HepG2 (cell line): ENCODE measurements at regions of chr6 and their contacts with region 1.

Region 1: DNA sequence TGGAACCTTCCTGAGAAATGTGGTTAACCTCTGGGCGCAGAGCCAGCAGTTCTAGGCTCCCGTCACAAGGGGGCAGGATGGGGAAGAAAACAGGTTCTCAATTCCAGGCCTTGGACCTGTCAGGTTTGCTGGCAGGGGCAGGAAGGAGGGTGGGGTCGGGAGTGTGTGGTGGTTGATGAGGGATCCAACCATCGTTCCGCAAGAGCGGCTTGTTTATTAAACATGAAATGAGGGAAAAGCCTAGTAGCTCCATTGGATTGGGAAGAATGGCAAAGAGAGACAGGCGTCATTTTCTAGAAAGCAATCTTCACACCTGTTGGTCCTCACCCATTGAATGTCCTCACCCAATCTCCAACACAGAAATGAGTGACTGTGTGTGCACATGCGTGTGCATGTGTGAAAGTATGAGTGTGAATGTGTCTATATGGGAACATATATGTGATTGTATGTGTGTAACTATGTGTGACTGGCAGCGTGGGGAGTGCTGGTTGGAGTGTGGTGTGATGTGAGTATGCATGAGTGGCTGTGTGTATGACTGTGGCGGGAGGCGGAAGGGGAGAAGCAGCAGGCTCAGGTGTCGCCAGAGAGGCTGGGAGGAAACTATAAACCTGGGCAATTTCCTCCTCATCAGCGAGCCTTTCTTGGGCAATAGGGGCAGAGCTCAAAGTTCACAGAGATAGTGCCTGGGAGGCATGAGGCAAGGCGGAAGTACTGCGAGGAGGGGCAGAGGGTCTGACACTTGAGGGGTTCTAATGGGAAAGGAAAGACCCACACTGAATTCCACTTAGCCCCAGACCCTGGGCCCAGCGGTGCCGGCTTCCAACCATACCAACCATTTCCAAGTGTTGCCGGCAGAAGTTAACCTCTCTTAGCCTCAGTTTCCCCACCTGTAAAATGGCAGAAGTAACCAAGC is 29.6 kb downstream of the SRSF3 start:
- DNase-seq: peak; percentile 77
- ATAC-seq: peak; percentile 78
- H3K4me3 ChIP-seq: no peak overlapping the region; a peak in 2 of 6 replicates
- H3K27ac ChIP-seq: no peak overlapping the region
- H3K4me1 ChIP-seq: peaks cover 30% of the 10 kb centered on the region
- H3K27me3 ChIP-seq: peaks cover 0 to 29% of the 10 kb centered on the region in 2 experiments; a peak in 2 of 5 replicates
- CTCF ChIP-seq: peak; percentile 98
- EP300 ChIP-seq: peak in 1 of 2 experiments; percentile 17; a peak in 1 of 4 replicates
- POLR2A ChIP-seq: no peak
- RAD21 ChIP-seq: peak; percentile 97

Region 2: DNA sequence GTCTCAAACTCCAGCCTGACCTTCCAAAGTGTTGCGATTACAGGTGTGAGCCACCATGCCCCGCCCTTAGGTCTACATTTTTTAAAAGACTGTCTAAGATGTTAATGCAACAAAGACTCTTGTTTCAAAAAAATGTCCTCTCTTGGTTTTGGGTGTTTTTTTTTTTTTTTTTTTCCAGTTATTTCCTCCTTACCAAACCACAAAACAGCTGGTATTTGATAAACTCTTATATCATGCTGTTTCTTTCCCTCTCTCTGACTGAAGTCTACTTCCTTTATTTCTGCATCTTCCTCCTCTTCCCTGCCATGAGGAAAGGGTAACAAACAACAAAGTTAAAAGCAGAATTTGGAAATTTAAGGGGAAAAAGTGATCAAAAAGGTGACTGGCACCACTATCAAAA is 97.7 kb before region 1 on chr6:
- CTCF ChIA-PET with region 1: no interaction called
- POLR2A ChIA-PET with region 1: no interaction called
- in situ Hi-C with region 1: no loop called
- intact Hi-C with region 1: no loop called
- DNase-seq: no peak
- ATAC-seq: no peak
- H3K4me3 ChIP-seq: no peak overlapping the region
- H3K27ac ChIP-seq: no peak overlapping the region
- H3K4me1 ChIP-seq: peaks cover 15% of the 10 kb centered on the region
- H3K27me3 ChIP-seq: no peaks in the 10 kb centered on the region
- CTCF ChIP-seq: no peak
- EP300 ChIP-seq: no peak
- POLR2A ChIP-seq: no peak
- RAD21 ChIP-seq: no peak

Region 3: DNA sequence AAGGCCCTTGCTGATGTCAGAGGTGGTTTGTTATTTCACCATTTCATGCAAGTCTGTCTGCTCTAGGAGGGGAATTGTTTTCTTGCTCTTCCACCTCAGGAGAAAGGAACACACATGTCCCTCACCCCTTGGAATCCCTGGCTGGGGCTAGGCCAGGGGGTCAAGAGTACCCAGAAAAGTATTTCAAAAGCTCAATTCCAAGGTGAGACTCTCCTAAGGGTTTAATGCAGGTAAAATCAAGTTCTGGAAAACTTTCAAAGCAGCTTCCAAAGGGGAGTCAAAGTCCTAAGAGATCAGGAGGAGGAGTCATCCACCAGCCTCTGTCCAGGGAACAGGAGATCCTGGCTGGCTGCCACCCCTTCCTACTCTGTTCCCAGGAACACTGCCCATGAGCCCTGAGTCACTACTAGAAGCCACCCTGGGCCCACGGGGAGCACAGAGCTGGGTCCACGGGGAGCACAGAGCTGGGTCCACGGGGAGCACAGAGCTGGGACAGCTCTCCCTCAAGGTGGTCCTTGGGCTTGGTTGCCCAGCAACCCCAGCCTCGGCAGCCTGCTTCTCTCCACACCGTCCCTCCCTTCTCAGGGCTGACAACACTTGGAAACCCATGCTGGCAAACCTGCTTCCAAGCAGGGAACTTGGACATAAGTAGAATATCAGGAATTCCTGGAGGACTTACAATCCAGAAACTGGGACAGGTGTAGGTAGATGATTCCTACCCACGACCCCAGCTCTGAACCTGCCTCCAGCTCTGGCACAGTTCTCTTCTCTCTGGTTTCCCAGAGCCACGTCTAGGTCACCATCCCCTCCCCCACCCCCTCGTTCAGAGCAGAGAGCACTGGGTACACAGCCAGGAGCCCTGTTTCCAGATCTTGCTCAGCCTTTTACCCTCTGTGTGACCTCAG is 19.4 kb after region 1 on chr6:
- CTCF ChIA-PET with region 1: no interaction called
- POLR2A ChIA-PET with region 1: interaction called, 14 read pairs
- in situ Hi-C with region 1: no loop called
- intact Hi-C with region 1: no loop called
- DNase-seq: peak; percentile 88
- ATAC-seq: peak; percentile 97
- H3K4me3 ChIP-seq: peak overlapping the region; percentile 14 to 70 (median 39)
- H3K27ac ChIP-seq: peak overlapping the region; percentile 61
- H3K4me1 ChIP-seq: peaks cover 57% of the 10 kb centered on the region
- H3K27me3 ChIP-seq: 0 out of 5 replicates have a peak, but pooled peaks cover 0 to 6% of the 10 kb centered on the region in 2 experiments
- CTCF ChIP-seq: no peak; the same call in 1 of the 2 replicates
- EP300 ChIP-seq: no peak
- POLR2A ChIP-seq: 0 out of 4 replicates have a peak, but pooled peaks of 1 of the 2 experiments have one; percentile 25
- RAD21 ChIP-seq: no peak

Region 4: GRCh38 chr6:36701401-36701991 is 77.7 kb after region 1 on chr6:
- CTCF ChIA-PET with region 1: interaction called, 8 read pairs
- POLR2A ChIA-PET with region 1: no interaction called
- in situ Hi-C with region 1: no loop called
- intact Hi-C with region 1: loop called (anchors 1 kb)
- DNase-seq: peak; percentile 52
- ATAC-seq: peak; percentile 87
- H3K4me3 ChIP-seq: no peak overlapping the region
- H3K27ac ChIP-seq: no peak overlapping the region
- H3K4me1 ChIP-seq: no peaks in the 10 kb centered on the region
- H3K27me3 ChIP-seq: peaks cover 10 to 69% of the 10 kb centered on the region in 2 experiments; a peak in 4 of 5 replicates
- CTCF ChIP-seq: peak; percentile 77
- EP300 ChIP-seq: no peak
- POLR2A ChIP-seq: no peak
- RAD21 ChIP-seq: peak; percentile 65; the same call in 1 of the 2 replicates

Region 5: DNA sequence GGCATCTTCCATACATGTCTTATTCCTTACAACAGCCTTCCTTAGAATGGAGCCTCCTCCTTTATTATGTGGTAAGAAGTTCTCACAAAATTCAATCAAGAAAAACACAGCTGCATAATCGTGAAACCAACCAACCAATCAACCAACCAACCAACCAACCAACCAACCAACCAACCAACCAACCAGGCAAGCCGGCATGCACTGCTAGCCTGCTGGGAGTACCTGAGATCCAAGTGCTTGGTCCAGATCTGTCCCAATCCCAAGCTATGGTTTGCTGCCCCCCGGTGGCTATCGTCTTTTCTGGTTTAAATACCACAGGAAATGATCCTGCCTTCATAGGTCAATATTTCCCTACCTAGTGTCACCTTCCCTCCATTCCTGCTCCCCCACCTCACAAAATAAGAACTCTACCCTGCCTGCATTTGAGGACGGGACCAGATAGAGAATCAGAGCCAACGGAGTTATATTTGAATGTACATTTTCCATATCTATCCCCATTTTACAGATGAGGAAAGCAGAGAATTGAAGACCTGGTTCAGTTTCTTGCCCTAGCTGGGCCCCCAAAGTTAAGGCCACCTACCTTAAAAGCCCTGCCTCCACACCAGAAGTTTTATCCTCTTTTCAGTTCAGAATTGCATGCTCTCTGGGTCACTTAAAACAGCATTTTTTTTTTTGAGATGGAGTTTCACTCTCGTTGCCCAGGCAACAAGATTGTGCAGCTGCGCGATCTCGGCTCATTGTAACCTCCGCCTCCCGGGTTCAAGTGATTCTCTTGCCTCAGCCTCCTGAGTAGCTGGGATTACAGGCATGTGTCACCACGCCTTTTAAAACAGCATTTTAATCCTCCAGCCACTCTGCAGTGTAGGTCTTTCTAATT is 100.9 kb after region 1 on chr6:
- CTCF ChIA-PET with region 1: interaction called, 59 read pairs
- POLR2A ChIA-PET with region 1: no interaction called
- in situ Hi-C with region 1: loop called (anchors 5 kb)
- intact Hi-C with region 1: loop called (anchors 1 kb)
- DNase-seq: peak; percentile 77
- ATAC-seq: peak; percentile 88
- H3K4me3 ChIP-seq: no peak overlapping the region
- H3K27ac ChIP-seq: no peak overlapping the region
- H3K4me1 ChIP-seq: no peaks in the 10 kb centered on the region
- H3K27me3 ChIP-seq: peaks cover 7 to 45% of the 10 kb centered on the region in 2 experiments; a peak in 3 of 5 replicates
- CTCF ChIP-seq: peak; percentile 93
- EP300 ChIP-seq: no peak
- POLR2A ChIP-seq: no peak
- RAD21 ChIP-seq: peak; percentile 93

Region 6: GRCh38 chr6:36759148-36759759 is 135.5 kb after region 1 on chr6:
- CTCF ChIA-PET with region 1: interaction called, 17 read pairs
- POLR2A ChIA-PET with region 1: no interaction called
- in situ Hi-C with region 1: no loop called
- intact Hi-C with region 1: no loop called
- DNase-seq: peak; percentile 63
- ATAC-seq: peak; percentile 96
- H3K4me3 ChIP-seq: no peak overlapping the region
- H3K27ac ChIP-seq: no peak overlapping the region
- H3K4me1 ChIP-seq: peaks cover 10% of the 10 kb centered on the region; the same call in 1 of the 2 replicates
- H3K27me3 ChIP-seq: peaks cover 3 to 73% of the 10 kb centered on the region in 2 experiments; a peak in 4 of 5 replicates
- CTCF ChIP-seq: peak; percentile 97
- EP300 ChIP-seq: no peak
- POLR2A ChIP-seq: no peak
- RAD21 ChIP-seq: peak; percentile 85

Region 7: GRCh38 chr6:36851149-36851614 is 227.4 kb after region 1 on chr6:
- CTCF ChIA-PET with region 1: no interaction called
- POLR2A ChIA-PET with region 1: no interaction called
- in situ Hi-C with region 1: no loop called
- intact Hi-C with region 1: loop called (anchors 10 kb)
- DNase-seq: peak; percentile 69
- ATAC-seq: no peak; the same call in 2 of the 3 replicates
- H3K4me3 ChIP-seq: no peak overlapping the region
- H3K27ac ChIP-seq: no peak overlapping the region
- H3K4me1 ChIP-seq: peaks cover 35% of the 10 kb centered on the region
- H3K27me3 ChIP-seq: no peaks in the 10 kb centered on the region
- CTCF ChIP-seq: peak; percentile 88
- EP300 ChIP-seq: no peak
- POLR2A ChIP-seq: no peak
- RAD21 ChIP-seq: peak; percentile 87